Activated T-helper 2 cell treated with anti-CD3 and anti-CD28 coated beads, Interferon-gamma antibody, Interleukin-2, Interleukin-4, amounts not matched to agents 10 μg/mL and 5 μg/mL and 100 μg/mL, durations not matched to agents 14 hours and 24 hours and 36 hours (primary cell): ENCODE measurements at regions of chr10 and their contacts with region 1.

Region 1: GRCh38 chr10:32445740-32446535 is at the start of gene CCDC7:
- DNase-seq: peak; percentile 82
- H3K4me3 Mint-ChIP-seq: peak within 1 kb of the TSS; percentile 90
- H3K27ac Mint-ChIP-seq: peak within 1 kb of the TSS; percentile 94
- H3K4me1 Mint-ChIP-seq: peaks cover 10% of the 10 kb centered on the region
- H3K27me3 Mint-ChIP-seq: peaks cover 2% of the 10 kb centered on the region
- total RNA-seq, gene CCDC7: 12.2 and 14.0 TPM in 2 replicates

Region 2: DNA sequence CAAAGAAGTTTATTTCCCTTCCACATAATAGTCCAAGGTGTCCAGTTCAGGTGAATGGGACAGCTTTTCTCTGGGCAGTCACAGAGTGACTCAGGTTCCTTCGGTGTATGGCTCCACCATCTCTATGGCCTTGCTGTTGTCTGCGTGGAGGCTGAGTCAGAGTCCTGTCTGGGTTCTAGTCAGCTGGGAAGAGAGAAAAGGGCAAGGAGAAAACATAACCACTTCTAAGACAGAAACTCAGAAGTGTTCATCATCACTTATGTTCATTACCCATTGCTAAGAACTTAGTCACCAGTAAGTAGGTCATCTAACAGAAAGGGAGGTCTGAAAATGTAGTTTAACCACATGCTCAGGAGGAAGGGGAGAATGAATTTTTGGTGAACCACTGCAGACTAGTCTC is 32.4 kb before region 1 on chr10:
- intact Hi-C with region 1: loop called (anchors 1 kb)
- DNase-seq: no peak
- H3K4me3 Mint-ChIP-seq: no peak overlapping the region
- H3K27ac Mint-ChIP-seq: peak overlapping the region; percentile 9
- H3K4me1 Mint-ChIP-seq: peaks cover 6% of the 10 kb centered on the region
- H3K27me3 Mint-ChIP-seq: peaks cover 4% of the 10 kb centered on the region

Region 3: DNA sequence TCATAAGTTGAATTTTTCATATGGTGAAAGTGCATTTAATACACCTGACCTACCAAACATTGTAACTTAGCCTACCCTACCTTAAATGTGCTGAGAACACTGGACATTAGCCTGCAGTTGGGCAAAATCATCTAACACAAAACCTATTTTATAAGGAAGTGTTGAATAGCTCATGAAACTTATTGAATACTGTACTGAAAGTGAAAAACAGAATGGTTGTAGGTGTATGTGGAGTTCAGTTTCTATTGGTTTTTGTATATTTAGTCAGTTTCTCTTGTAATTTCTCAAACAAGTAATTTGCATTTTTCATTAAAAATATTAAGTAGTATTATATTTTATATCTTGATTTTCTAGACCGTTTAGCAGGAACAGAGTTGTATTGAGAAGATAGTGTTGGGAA is 15.3 kb after region 1 on chr10:
- intact Hi-C with region 1: loop called (anchors 1 kb)
- DNase-seq: no peak
- H3K4me3 Mint-ChIP-seq: no peak overlapping the region
- H3K27ac Mint-ChIP-seq: no peak overlapping the region
- H3K4me1 Mint-ChIP-seq: peaks cover 25% of the 10 kb centered on the region
- H3K27me3 Mint-ChIP-seq: no peaks in the 10 kb centered on the region